Panc1 (cell line): ENCODE measurements at regions of chr1 and their contacts with region 1.

Region 1: DNA sequence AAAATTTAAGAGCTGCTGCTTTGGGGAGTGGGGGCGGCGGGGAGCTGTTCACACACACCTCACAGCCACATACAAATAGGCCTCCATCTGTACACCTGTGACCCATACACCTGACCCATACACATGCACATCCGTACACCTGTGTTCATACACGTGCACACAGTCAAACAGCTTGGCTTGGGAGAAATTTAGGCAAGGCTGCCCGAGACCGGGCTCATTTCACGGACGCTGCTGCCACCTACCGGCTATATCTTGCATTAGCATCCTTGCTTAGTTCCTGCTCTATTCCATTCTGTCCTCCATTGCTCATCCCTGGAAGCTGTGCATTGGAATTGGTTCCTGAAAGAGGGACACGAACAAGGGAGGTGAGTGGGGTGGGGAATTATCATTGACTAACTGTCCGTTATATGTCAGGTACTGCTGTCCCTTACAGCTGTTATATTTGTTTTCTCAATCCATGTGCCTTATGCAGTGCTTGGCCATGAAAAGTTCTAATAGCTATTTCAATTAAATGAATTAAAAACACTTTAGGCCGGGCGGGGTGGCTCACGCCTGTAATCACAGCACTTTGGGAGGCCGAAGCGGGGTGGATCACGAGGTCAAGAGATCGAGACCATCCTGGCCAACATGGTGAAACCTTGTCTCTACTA is 37.1 kb upstream of the EPB41 start:
- DNase-seq: peak; percentile 74
- ATAC-seq: peak; percentile 89
- H3K4me3 ChIP-seq: no peak overlapping the region
- H3K27ac ChIP-seq: no peak overlapping the region
- H3K4me1 ChIP-seq: no peaks in the 10 kb centered on the region
- H3K27me3 ChIP-seq: no peaks in the 10 kb centered on the region
- CTCF ChIP-seq: peak; percentile 90

Region 2: GRCh38 chr1:28756846-28757245 is 120.4 kb before region 1 on chr1:
- CTCF ChIA-PET with region 1: no interaction called
- POLR2A ChIA-PET with region 1: no interaction called
- in situ Hi-C with region 1: no loop called
- intact Hi-C with region 1: no loop called
- DNase-seq: no peak
- ATAC-seq: no peak
- H3K4me3 ChIP-seq: no peak overlapping the region
- H3K27ac ChIP-seq: no peak overlapping the region
- H3K4me1 ChIP-seq: no peaks in the 10 kb centered on the region
- H3K27me3 ChIP-seq: no peaks in the 10 kb centered on the region
- CTCF ChIP-seq: no peak

Region 3: DNA sequence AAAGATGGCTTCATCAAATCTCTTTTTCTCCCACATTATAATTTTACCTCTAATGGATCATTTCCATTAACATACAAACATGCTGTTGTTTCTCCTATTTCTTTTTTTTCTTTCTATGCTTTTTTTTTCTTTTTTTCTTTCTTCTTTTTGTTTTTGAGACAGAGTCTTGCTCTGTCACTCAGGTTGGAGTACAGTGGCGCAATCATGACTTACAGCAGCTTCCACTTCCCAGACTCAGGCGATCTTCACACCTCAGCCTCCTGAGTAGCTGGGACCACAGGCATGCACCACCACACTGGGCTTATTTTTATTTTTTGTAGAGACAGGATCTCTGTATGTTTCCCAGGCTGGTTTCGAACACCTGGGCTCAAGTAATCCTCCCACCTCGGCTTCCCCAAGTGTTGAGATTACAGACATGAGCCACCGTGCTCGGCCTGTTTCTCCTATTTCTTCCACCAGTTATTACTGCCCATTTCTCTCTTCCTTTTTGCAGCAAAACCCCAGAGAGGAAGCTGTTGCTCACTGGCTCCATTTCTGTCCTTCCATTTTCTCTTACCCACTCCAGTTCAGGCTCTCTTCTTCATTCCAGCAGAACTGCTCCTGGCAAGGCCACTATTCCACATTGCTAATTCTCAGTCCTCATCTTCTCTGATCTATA is 97.4 kb before region 1 on chr1:
- CTCF ChIA-PET with region 1: interaction called, 42 read pairs
- POLR2A ChIA-PET with region 1: interaction called, 19 read pairs
- in situ Hi-C with region 1: no loop called
- intact Hi-C with region 1: loop called (anchors 1 kb)
- DNase-seq: no peak
- ATAC-seq: no peak
- H3K4me3 ChIP-seq: no peak overlapping the region
- H3K27ac ChIP-seq: no peak overlapping the region
- H3K4me1 ChIP-seq: no peaks in the 10 kb centered on the region
- H3K27me3 ChIP-seq: no peaks in the 10 kb centered on the region
- CTCF ChIP-seq: no peak

Region 4: DNA sequence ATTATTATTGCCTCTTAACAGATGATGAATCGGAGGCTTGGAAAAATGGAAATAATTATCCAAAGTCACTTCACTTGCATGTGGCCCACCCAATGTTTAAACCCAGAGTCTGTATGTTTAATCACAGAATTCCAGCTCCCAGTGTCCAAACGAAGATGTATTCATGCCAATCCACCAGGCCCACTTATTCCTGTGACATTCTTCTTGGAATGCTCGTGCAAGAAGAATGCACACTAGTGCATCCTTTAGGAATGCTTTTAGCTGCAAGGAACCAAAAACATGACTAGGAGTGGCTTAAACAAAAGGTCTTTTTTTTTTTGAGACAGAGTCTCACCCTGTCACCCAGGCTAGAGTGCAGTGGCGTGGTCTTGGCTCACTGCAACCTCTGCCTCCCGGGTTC is 74.2 kb before region 1 on chr1:
- CTCF ChIA-PET with region 1: interaction called, 12 read pairs
- POLR2A ChIA-PET with region 1: no interaction called
- in situ Hi-C with region 1: no loop called
- intact Hi-C with region 1: no loop called
- DNase-seq: no peak
- ATAC-seq: no peak
- H3K4me3 ChIP-seq: no peak overlapping the region
- H3K27ac ChIP-seq: no peak overlapping the region
- H3K4me1 ChIP-seq: no peaks in the 10 kb centered on the region; the same call in 1 of the 2 replicates
- H3K27me3 ChIP-seq: no peaks in the 10 kb centered on the region
- CTCF ChIP-seq: no peak

Region 5: DNA sequence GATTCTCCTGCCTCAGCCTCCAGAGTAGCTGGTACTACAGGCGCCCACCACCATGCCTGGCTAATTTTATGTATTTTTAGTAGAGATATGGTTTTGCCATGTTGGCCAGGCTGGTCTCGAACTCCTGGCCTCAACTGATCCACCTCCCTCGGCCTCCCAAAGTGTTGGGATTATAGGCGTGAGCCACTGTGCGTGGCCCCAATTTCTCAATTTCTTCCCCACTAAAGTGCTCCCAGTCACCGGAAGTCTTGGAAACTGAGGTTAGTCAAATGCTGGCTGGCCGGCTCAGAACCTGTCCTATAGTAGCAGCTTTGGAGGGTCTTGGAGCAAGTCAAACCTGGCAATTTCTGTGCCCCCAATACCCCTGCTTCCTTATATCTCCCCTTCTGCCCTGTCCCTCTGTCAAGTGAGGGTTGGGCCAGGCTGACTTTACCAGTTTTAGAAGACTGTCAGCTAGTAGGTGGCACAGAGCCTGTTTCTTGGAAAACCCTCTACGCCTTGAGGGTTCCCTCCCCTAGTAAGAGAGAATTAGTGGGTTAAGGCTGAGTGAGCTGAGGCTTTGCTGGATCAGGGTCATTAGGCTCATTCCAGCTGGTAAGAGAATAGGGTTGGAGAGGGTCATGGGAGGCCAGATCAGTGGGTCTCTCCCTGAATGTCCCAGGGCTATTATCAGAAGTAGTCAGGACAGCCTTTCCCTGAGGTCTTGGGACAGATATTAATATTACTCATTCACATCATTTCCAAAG is 28.8 kb after region 1 on chr1:
- CTCF ChIA-PET with region 1: interaction called, 23 read pairs
- POLR2A ChIA-PET with region 1: no interaction called
- in situ Hi-C with region 1: no loop called
- intact Hi-C with region 1: no loop called
- DNase-seq: no peak
- ATAC-seq: 0 out of 2 replicates have a peak, but pooled peaks have one; percentile 38
- H3K4me3 ChIP-seq: no peak overlapping the region
- H3K27ac ChIP-seq: no peak overlapping the region
- H3K4me1 ChIP-seq: no peaks in the 10 kb centered on the region
- H3K27me3 ChIP-seq: no peaks in the 10 kb centered on the region
- CTCF ChIP-seq: no peak

Region 6: GRCh38 chr1:28950449-28950848 is 73.2 kb after region 1 on chr1:
- CTCF ChIA-PET with region 1: no interaction called
- POLR2A ChIA-PET with region 1: interaction called, 10 read pairs
- in situ Hi-C with region 1: no loop called
- intact Hi-C with region 1: no loop called
- DNase-seq: no peak
- ATAC-seq: no peak
- H3K4me3 ChIP-seq: no peak overlapping the region
- H3K27ac ChIP-seq: no peak overlapping the region
- H3K4me1 ChIP-seq: no peaks in the 10 kb centered on the region
- H3K27me3 ChIP-seq: no peaks in the 10 kb centered on the region
- CTCF ChIP-seq: no peak